ENCODE measurements at regions of chr7 and their contacts with region 1.

Region 1: DNA sequence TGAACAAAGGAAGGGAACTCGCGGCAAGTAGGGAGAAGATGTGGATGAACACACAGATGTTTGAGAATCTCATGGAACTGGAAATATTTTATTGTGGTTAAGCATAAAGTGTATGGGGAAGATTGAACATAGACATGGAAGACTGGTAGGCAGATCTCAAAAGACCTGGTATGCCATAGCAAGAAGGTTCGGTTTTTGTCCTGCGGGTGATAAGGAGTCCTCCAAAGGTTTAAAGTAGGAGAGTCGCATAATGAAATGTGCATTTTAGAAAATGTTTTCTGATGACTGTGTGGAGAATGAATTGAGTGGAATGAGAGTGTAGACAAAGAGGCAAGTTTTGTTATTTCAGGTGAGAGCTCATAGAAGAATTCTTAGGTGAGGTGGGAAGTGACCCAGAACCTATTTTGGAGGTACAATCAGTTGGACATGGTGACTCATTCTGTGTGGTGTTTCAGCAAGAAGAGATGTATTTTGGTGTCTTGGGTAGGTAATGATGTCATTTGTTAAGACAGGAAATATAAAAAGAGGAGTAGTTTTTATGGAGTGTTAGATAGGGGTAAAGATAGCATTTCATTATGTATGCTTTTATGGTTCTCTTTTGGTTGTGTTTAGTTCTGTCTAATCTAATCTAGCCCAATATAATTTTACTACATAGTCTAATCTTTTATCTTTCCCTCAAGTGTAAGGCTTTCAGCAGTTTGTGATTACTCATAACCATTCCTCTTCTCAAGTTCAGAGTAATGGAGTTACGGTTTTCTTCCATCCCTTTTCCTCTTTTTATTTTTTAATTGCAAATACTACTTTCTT is 239.2 kb downstream of the EXOC4 start:
- DNase-seq: no peak
- H3K4me3 Mint-ChIP-seq: peak overlapping the region; percentile 20
- H3K27ac Mint-ChIP-seq: peak overlapping the region; percentile 94
- H3K4me1 Mint-ChIP-seq: peaks cover 46% of the 10 kb centered on the region
- H3K27me3 Mint-ChIP-seq: no peaks in the 10 kb centered on the region

Region 2: GRCh38 chr7:132430861-132431822 is 1060.9 kb before region 1 on chr7:
- intact Hi-C with region 1: loop called (anchors 1 kb)
- DNase-seq: peak; percentile 79
- H3K4me3 Mint-ChIP-seq: no peak overlapping the region
- H3K27ac Mint-ChIP-seq: peak overlapping the region; percentile 65
- H3K4me1 Mint-ChIP-seq: peaks cover 76% of the 10 kb centered on the region
- H3K27me3 Mint-ChIP-seq: no peaks in the 10 kb centered on the region

Region 3: DNA sequence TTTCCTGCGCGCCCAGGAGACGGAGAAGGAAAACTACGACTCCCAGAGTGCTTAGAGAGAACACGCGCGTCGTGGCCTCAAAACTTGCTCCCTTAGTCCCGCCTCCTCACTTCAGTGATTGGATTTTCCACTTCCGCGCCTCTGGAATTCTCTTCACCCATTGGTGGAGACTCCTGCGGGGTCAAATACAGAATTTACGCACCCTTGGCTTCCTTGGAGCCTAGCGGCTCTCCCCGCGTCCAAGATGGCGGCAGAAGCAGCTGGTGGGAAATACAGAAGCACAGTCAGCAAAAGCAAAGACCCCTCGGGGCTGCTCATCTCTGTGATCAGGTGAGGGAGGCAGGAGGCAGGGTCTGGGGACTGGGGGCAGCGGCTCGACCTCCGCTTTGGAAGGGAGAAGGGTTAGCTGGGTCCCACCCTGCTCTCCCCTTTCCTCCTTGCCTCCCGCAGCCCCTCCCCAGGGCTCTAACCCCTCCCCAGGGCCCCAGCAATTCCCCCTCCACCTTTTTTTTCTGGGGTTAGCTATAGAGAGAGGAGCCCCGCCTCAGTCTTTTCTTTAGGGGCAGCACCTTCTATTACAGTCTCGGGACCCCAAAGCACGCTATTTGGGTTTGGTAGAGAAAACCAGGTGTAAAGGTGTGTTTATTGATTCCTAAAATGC is 239.1 kb before region 1 on chr7 and contains the start of gene EXOC4:
- intact Hi-C with region 1: loop called (anchors 5 kb)
- DNase-seq: peak; percentile 92
- H3K4me3 Mint-ChIP-seq: peak within 1 kb of the TSS; percentile 94
- H3K27ac Mint-ChIP-seq: peak within 1 kb of the TSS; percentile 87
- H3K4me1 Mint-ChIP-seq: peaks cover 22% of the 10 kb centered on the region
- H3K27me3 Mint-ChIP-seq: peaks cover 3% of the 10 kb centered on the region
- total RNA-seq, gene EXOC4: 65.0 and 70.5 TPM in 2 replicates

Region 4: GRCh38 chr7:133376514-133376913 is 115.5 kb before region 1 on chr7:
- intact Hi-C with region 1: no loop called
- DNase-seq: no peak
- H3K4me3 Mint-ChIP-seq: no peak overlapping the region
- H3K27ac Mint-ChIP-seq: no peak overlapping the region
- H3K4me1 Mint-ChIP-seq: no peaks in the 10 kb centered on the region
- H3K27me3 Mint-ChIP-seq: no peaks in the 10 kb centered on the region

Region 5: GRCh38 chr7:133461421-133461820 is 30.6 kb before region 1 on chr7:
- intact Hi-C with region 1: loop called (anchors 1 kb)
- DNase-seq: no peak
- H3K4me3 Mint-ChIP-seq: peak overlapping the region; percentile 58
- H3K27ac Mint-ChIP-seq: peak overlapping the region; percentile 76
- H3K4me1 Mint-ChIP-seq: peaks cover 33% of the 10 kb centered on the region
- H3K27me3 Mint-ChIP-seq: no peaks in the 10 kb centered on the region

Region 6: GRCh38 chr7:133504825-133505224 is 12.8 kb after region 1 on chr7:
- intact Hi-C with region 1: no loop called
- DNase-seq: no peak
- H3K4me3 Mint-ChIP-seq: no peak overlapping the region
- H3K27ac Mint-ChIP-seq: no peak overlapping the region
- H3K4me1 Mint-ChIP-seq: peaks cover 2% of the 10 kb centered on the region
- H3K27me3 Mint-ChIP-seq: no peaks in the 10 kb centered on the region

Region 7: DNA sequence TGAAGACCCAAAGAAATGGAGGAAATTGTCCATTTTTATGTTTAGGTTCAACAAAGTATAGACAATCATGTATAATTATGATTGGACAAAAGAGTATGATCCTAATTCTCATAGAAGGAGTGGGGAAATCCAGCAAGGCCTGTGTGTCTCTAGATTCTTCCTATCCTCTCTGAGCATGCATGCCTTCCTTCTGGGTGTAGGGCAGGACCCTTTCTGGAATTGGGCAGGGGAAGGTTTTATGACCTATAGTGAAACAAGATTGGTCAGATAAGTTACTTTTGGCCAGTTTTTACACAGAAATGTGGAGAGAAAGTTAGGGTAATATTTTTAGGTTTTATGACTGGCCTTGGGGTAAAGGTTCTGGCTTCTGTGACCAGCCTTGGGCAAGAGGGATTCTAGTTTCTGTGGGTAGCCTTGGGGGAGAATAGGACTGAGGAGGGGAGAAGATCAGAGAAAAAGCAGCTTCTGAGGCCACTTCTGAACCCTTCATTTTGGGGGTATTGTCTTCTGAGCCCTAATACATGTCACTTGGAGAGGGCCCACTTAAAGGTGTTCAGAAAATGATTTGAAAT is 50.2 kb after region 1 on chr7:
- intact Hi-C with region 1: loop called (anchors 1 kb)
- DNase-seq: no peak
- H3K4me3 Mint-ChIP-seq: no peak overlapping the region
- H3K27ac Mint-ChIP-seq: peak overlapping the region; percentile 1
- H3K4me1 Mint-ChIP-seq: peaks cover 10% of the 10 kb centered on the region
- H3K27me3 Mint-ChIP-seq: no peaks in the 10 kb centered on the region

Region 8: GRCh38 chr7:133735222-133735621 is 243.2 kb after region 1 on chr7:
- intact Hi-C with region 1: loop called (anchors 5 kb)
- DNase-seq: no peak
- H3K4me3 Mint-ChIP-seq: no peak overlapping the region
- H3K27ac Mint-ChIP-seq: no peak overlapping the region
- H3K4me1 Mint-ChIP-seq: peaks cover 3% of the 10 kb centered on the region
- H3K27me3 Mint-ChIP-seq: no peaks in the 10 kb centered on the region